ENCODE measurements at regions of chrX and their contacts with region 1.

Region 1: GRCh38 chrX:72245461-72246089 is 6.7 kb upstream of the ERCC6L start:
- DNase-seq: peak; percentile 60 to 74
- ATAC-seq: peak; percentile 80 to 94
- H3K4me3 ChIP-seq: no peak overlapping the region
- H3K27ac ChIP-seq: no peak overlapping the region
- H3K4me1 ChIP-seq: peaks cover 9% of the 10 kb centered on the region; the same call in 2 of the 3 replicates
- CTCF ChIP-seq: peak; percentile 64
- EP300 ChIP-seq: no peak
- POLR2A ChIP-seq: no peak
- RAD21 ChIP-seq: peak; percentile 78 to 80

Region 2: GRCh38 chrX:72255864-72256263 is 10.3 kb after region 1 on chrX:
- CTCF ChIA-PET with region 1: interaction called, 10 read pairs
- POLR2A ChIA-PET with region 1: no interaction called
- DNase-seq: no peak
- ATAC-seq: no peak
- H3K4me3 ChIP-seq: no peak overlapping the region
- H3K27ac ChIP-seq: no peak overlapping the region
- H3K4me1 ChIP-seq: peaks cover 15% of the 10 kb centered on the region
- CTCF ChIP-seq: no peak
- EP300 ChIP-seq: no peak
- POLR2A ChIP-seq: no peak
- RAD21 ChIP-seq: no peak

Region 3: GRCh38 chrX:72269671-72270251 is 24.2 kb after region 1 on chrX:
- CTCF ChIA-PET with region 1: interaction called, 14 read pairs
- POLR2A ChIA-PET with region 1: interaction called, 7 read pairs
- DNase-seq: peak in 1 of 2 experiments; percentile 38
- ATAC-seq: peak in 1 of 2 experiments; percentile 55; a peak in 3 of 6 replicates
- H3K4me3 ChIP-seq: no peak overlapping the region
- H3K27ac ChIP-seq: peak overlapping the region in 1 of 2 experiments; percentile 76; a peak in 4 of 6 replicates
- H3K4me1 ChIP-seq: peaks cover 63% of the 10 kb centered on the region
- CTCF ChIP-seq: no peak
- EP300 ChIP-seq: no peak
- POLR2A ChIP-seq: no peak
- RAD21 ChIP-seq: no peak

Region 4: DNA sequence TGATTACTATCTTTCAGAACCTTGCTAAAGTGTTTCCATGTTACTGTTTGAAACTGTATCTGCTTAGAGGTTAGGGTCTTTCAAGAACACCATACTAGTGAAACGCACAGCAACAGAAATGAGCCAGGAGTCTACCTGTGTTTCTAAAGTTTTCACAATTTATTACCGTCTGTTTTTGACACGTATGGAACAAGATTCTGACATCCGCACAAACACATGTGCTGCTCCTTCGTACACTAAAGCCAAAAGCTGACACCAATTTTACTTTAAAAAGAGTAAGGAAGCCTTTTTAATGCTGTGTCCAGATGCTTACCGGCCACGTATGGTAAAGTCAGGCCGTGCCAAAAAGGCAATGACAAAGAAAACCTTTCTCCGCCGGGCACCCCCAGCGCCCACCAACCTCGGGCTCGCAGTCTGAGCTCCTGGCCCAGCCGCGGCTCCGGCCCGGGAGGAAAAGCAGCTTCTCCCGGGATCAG is 30.9 kb after region 1 on chrX:
- CTCF ChIA-PET with region 1: interaction called, 28 read pairs
- POLR2A ChIA-PET with region 1: interaction called, 7 read pairs
- DNase-seq: no peak
- ATAC-seq: no peak
- H3K4me3 ChIP-seq: peak overlapping the region; percentile 80
- H3K27ac ChIP-seq: peak overlapping the region; percentile 84 to 98
- H3K4me1 ChIP-seq: peaks cover 40% of the 10 kb centered on the region
- CTCF ChIP-seq: no peak
- EP300 ChIP-seq: no peak
- POLR2A ChIP-seq: no peak
- RAD21 ChIP-seq: no peak